Activated naive CD4-positive, alpha-beta T cell treated with anti-CD3 and anti-CD28 coated beads for 36 hours (primary cell): ENCODE measurements at regions of chr17 and their contacts with region 1.

Region 1: DNA sequence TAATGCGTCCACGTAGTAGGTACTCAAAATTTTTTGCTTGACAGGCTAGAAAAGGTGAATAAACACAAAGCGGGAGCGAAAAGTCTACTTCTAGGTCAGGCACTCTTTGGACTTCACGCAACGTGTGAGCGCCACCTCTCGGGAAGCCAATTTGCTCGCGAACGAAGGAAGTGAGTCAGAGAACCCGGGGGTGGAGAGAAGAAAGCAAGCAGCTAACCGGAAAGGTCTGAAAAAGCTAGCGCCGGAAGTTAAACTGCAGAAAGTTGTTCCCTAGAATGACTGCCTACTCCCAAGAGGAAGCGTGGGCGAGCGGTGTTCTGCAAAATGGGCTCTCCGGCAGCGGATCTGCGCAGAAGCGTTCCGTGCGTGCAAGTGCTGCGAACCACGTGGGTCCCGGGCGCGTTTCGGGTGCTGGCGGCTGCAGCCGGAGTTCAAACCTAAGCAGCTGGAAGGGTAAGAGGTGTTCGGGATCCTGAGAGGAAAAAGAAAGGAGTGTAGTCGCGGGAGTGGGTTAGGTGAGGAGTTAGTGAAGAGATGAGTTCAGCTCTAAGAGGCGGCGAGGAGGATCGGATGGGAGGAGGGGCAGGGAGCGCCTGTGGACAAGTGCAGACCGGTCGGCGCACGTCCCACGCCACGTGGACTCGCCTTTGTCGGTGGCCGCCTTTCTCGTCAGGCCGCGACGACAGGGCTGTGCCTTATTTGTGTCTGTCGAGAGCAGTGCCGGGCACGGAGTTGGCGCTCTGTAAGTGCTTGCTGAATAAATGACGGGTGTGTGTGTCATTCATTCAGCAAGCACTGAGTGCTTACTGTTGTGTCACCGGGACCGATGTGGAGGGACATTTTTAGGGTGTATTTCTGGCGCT is at the start of gene NME1:
- DNase-seq: peak; percentile 99
- H3K4me3 Mint-ChIP-seq: no peak within 1 kb of the TSS
- H3K27ac Mint-ChIP-seq: no peak within 1 kb of the TSS
- H3K4me1 Mint-ChIP-seq: peaks cover 27% of the 10 kb centered on the region
- H3K27me3 Mint-ChIP-seq: no peaks in the 10 kb centered on the region
- total RNA-seq, gene NME1: 259 to 263 TPM

Region 2: GRCh38 chr17:50707289-50708049 is 446.0 kb before region 1 on chr17 and contains the start of gene ANKRD40:
- CTCF ChIA-PET with region 1: no interaction called
- intact Hi-C with region 1: loop called (anchors 5 kb)
- DNase-seq: peak; percentile 94
- H3K4me3 Mint-ChIP-seq: peak within 1 kb of the TSS; percentile 95
- H3K27ac Mint-ChIP-seq: peak within 1 kb of the TSS; percentile 92
- H3K4me1 Mint-ChIP-seq: peaks cover 44% of the 10 kb centered on the region
- H3K27me3 Mint-ChIP-seq: no peaks in the 10 kb centered on the region
- total RNA-seq, gene ANKRD40: 25.7 to 26.5 TPM

Region 3: GRCh38 chr17:50944054-50944901 is 209.2 kb before region 1 on chr17:
- CTCF ChIA-PET with region 1: no interaction called
- intact Hi-C with region 1: loop called (anchors 1 kb)
- DNase-seq: peak; percentile 91
- H3K4me3 Mint-ChIP-seq: peak overlapping the region; percentile 81
- H3K27ac Mint-ChIP-seq: peak overlapping the region; percentile 91
- H3K4me1 Mint-ChIP-seq: peaks cover 28% of the 10 kb centered on the region
- H3K27me3 Mint-ChIP-seq: no peaks in the 10 kb centered on the region

Region 4: GRCh38 chr17:51015145-51015558 is 138.3 kb before region 1 on chr17:
- CTCF ChIA-PET with region 1: interaction called, 10 read pairs
- intact Hi-C with region 1: no loop called
- DNase-seq: no peak
- H3K4me3 Mint-ChIP-seq: no peak overlapping the region
- H3K27ac Mint-ChIP-seq: no peak overlapping the region
- H3K4me1 Mint-ChIP-seq: no peaks in the 10 kb centered on the region
- H3K27me3 Mint-ChIP-seq: no peaks in the 10 kb centered on the region

Region 5: DNA sequence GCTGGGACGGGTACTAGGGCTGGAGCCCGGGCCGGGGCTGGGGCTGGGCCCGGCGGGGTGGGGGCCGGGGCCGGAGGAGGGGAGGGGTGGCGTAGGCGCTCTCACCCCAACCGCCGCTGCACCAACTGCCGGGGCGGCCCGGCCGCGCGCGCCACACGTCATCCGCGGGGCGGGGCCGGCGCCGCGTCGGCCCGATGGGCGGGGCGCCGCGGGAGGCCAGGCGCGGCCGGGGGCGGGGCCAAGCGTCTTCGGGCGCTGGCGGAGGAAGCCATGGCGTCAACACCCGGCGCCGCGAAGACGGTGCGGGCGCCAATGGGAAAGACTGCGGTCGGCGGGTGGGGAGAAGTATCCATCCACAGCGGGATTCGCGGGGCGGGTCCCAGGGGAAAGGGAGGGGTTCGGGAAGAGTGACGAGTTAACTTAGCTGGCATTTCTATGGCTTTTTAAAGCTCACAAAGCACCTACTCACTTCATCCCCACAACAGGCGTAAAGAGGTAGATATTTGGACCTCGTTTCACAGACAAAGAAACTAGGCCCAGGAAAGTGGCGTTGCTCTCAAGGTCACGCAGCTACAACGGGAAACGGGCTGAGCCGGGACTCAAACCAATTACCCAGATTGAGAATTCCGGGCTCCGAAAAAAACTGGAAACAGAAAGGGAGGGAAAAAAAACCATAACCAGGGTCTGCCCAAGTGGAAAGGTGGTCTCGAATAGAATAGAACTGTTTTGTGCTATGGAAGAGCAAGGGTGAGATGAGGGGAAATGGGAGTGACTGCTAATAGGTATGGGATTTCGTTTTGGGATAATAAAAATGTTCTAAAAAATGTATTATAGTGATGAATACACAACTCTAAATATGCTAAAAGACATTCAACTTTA is 32.5 kb before region 1 on chr17 and contains the start of gene SPAG9:
- CTCF ChIA-PET with region 1: interaction called, 12 read pairs
- intact Hi-C with region 1: loop called (anchors 1 kb)
- DNase-seq: peak; percentile 92
- H3K4me3 Mint-ChIP-seq: peak within 1 kb of the TSS; percentile 98
- H3K27ac Mint-ChIP-seq: peak within 1 kb of the TSS; percentile 99
- H3K4me1 Mint-ChIP-seq: peaks cover 49% of the 10 kb centered on the region
- H3K27me3 Mint-ChIP-seq: no peaks in the 10 kb centered on the region
- total RNA-seq, gene SPAG9: 39.8 to 43.2 TPM